ENCODE measurements at regions of chr2 and their contacts with region 1.

Region 1: DNA sequence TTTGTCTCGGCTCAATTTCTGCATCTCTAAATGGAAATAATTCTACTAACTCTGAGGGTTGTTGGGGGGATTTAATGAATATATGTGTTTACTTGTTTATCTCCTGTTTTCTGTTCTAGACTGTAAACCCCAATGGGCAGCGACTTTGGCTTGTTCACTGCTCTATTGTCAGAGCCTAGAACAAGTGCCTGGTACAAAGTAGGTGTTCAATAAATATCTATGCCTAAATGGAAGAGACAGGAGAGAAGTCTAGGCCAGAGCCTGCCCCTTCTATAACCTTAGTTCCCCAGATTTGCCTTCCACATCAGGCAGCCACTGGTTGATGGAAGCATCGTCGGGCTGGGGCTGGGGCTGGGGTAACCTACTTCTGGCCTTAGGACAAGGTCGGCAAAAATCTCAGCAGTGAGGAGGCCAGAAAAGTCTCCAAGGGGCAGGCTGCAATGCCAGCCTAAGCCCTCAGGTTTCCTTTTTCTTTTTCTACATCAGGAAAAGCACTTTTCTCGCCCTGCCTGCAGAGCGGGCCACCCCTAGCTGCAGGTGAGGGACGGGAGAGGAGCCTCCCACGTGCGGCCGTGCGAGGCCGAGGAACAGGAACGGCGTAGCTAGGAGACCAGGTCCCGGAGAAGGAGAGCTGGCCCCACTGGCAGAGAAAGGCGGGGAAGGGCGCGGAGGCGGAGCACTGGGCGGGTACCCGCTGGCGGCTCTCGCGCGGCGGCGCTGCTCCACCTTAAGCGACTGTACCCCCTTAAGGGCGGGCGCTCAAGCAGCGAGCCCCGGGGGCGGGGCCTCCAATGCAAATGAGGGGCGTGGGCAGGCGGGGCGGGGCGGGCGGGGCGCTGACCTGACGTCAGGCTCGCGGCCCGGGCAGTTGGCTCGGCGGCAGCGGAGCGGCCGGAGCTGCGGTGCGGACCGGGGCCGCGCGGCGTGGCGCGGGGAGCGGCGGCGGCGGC is at the start of gene CNNM4:
- DNase-seq: peak; percentile 93
- ATAC-seq: peak; percentile 93
- H3K4me3 Mint-ChIP-seq: peak within 1 kb of the TSS; percentile 89
- H3K27ac Mint-ChIP-seq: peak within 1 kb of the TSS; percentile 87
- H3K4me1 Mint-ChIP-seq: peaks cover 40% of the 10 kb centered on the region
- H3K27me3 Mint-ChIP-seq: no peaks in the 10 kb centered on the region
- total RNA-seq, gene CNNM4: 6.9 to 7.9 TPM

Region 2: DNA sequence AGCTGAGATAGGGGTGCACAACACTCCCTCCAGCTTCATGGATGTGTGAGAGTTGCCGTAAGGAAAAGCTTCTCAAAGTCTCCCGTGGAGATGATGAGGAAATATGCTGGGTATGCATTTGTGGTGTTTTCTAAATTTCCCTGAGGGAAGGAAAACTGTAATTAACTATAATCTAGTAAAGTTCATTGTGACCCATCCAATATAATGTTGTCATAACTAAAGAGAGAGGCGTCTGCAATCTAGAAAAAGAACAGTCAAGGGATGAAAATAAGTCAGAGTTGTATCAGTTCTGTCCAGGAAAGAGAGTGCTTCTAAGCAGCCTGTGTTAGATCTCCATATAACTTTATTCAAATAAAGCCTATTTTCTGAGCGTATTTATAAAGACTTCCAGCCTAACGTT is 13.2 kb before region 1 on chr2:
- POLR2A ChIA-PET with region 1: no interaction called
- DNase-seq: no peak
- ATAC-seq: no peak
- H3K4me3 Mint-ChIP-seq: no peak overlapping the region
- H3K27ac Mint-ChIP-seq: no peak overlapping the region
- H3K4me1 Mint-ChIP-seq: peaks cover 2% of the 10 kb centered on the region
- H3K27me3 Mint-ChIP-seq: peaks cover 12% of the 10 kb centered on the region

Region 3: GRCh38 chr2:96773922-96774321 is 13.6 kb after region 1 on chr2:
- POLR2A ChIA-PET with region 1: interaction called, 16 read pairs
- DNase-seq: peak; percentile 56
- ATAC-seq: peak; percentile 74
- H3K4me3 Mint-ChIP-seq: peak overlapping the region; percentile 84
- H3K27ac Mint-ChIP-seq: peak overlapping the region; percentile 92
- H3K4me1 Mint-ChIP-seq: peaks cover 18% of the 10 kb centered on the region
- H3K27me3 Mint-ChIP-seq: no peaks in the 10 kb centered on the region

Region 4: GRCh38 chr2:96875498-96876268 is 115.4 kb after region 1 on chr2:
- POLR2A ChIA-PET with region 1: no interaction called
- DNase-seq: no peak
- ATAC-seq: no peak
- H3K4me3 Mint-ChIP-seq: no peak overlapping the region
- H3K27ac Mint-ChIP-seq: no peak overlapping the region
- H3K4me1 Mint-ChIP-seq: peaks cover 16% of the 10 kb centered on the region
- H3K27me3 Mint-ChIP-seq: peaks cover 4% of the 10 kb centered on the region